Activated CD4-positive, alpha-beta T cell treated with anti-CD3 and anti-CD28 coated beads for 36 hours (primary cell): ENCODE measurements at regions of chr20 and their contacts with region 1.

Region 1: GRCh38 chr20:36745927-36746659 is at the start of gene NDRG3:
- DNase-seq: peak; percentile 96
- ATAC-seq: peak; percentile 99
- H3K4me3 Mint-ChIP-seq: peak within 1 kb of the TSS; percentile 81
- H3K27ac Mint-ChIP-seq: peak within 1 kb of the TSS; percentile 87
- H3K4me1 Mint-ChIP-seq: peaks cover 20% of the 10 kb centered on the region
- H3K27me3 Mint-ChIP-seq: no peaks in the 10 kb centered on the region
- total RNA-seq, gene NDRG3: 24.8 to 27.5 TPM

Region 2: DNA sequence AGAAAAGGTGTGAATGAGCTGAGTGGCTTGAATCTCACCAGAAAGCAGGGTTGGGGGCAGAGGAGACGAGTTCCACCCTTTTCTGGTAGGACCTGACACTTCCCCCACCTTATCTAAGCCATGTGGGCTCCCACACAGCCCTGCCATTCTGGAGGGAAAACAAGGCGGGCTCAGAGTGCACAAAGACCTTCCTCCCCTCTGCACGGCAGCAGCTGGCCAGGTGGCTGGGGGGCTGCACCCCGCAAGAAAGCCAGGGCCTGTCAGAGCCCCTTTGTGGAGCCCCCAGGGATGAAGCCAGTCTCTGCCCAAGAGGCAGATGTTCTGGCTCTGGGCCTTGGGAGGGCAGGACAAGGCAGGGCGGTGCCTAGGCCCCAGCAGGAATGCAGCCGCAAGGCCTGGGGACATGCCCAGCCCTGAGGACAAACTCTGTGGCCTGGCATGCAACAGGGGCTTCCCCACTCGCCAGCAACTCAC is 75.9 kb after region 1 on chr20:
- CTCF ChIA-PET with region 1: no interaction called
- POLR2A ChIA-PET with region 1: no interaction called
- intact Hi-C with region 1: no loop called
- DNase-seq: no peak
- ATAC-seq: no peak
- H3K4me3 Mint-ChIP-seq: no peak overlapping the region
- H3K27ac Mint-ChIP-seq: no peak overlapping the region
- H3K4me1 Mint-ChIP-seq: no peaks in the 10 kb centered on the region
- H3K27me3 Mint-ChIP-seq: no peaks in the 10 kb centered on the region

Region 3: DNA sequence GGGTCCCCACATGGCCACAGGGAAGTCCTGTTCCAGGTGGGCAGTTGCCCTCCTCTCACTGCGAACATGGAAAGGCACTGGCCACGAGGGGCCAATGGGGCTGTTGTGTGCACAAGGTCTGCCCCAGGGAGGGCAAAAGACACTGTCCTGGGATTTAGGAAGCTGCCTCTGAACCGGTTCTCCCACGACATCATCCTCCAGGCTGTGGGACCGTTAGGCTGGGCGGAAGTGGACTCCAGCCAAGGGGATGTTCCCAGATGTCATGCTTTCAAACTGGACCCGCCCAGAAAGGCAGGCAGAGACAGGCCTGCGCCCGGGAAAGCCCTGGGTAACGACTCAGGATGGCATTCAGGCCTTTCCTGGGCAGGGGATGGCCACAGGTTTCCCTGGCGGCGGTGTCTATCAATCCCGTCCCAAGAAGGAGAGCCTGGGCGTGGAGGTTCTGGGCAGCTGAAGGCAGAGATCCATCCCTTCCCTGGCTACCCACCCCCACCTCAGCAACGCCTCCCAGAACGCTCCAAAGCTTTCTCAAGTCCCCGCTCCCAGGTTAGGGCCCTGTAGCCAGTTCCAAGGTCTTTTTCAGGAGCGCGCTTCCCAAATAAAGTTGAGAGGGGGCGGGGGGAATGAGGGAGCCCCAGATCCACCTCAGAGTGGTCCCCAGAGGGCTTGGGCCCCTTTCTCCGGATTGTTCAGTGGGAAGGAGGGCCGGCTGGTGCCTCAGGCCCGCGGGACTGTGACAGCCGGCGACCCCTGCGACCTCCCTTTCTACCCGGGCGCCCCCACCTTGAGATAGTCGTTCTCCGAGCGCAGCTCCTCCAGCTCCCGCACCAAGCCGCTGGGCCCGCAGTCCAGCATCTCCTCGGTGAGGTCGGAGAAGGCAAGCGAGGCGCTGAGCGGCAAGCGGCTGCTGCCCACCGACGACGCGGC is 116.0 kb after region 1 on chr20:
- CTCF ChIA-PET with region 1: no interaction called
- POLR2A ChIA-PET with region 1: no interaction called
- intact Hi-C with region 1: loop called in 1 of 2 experiments (anchors 5 kb)
- DNase-seq: no peak
- ATAC-seq: no peak
- H3K4me3 Mint-ChIP-seq: peak overlapping the region; percentile 37
- H3K27ac Mint-ChIP-seq: no peak overlapping the region
- H3K4me1 Mint-ChIP-seq: peaks cover 10% of the 10 kb centered on the region
- H3K27me3 Mint-ChIP-seq: peaks cover 21% of the 10 kb centered on the region